ENCODE measurements at regions of chr9 and their contacts with region 1.

Region 1: DNA sequence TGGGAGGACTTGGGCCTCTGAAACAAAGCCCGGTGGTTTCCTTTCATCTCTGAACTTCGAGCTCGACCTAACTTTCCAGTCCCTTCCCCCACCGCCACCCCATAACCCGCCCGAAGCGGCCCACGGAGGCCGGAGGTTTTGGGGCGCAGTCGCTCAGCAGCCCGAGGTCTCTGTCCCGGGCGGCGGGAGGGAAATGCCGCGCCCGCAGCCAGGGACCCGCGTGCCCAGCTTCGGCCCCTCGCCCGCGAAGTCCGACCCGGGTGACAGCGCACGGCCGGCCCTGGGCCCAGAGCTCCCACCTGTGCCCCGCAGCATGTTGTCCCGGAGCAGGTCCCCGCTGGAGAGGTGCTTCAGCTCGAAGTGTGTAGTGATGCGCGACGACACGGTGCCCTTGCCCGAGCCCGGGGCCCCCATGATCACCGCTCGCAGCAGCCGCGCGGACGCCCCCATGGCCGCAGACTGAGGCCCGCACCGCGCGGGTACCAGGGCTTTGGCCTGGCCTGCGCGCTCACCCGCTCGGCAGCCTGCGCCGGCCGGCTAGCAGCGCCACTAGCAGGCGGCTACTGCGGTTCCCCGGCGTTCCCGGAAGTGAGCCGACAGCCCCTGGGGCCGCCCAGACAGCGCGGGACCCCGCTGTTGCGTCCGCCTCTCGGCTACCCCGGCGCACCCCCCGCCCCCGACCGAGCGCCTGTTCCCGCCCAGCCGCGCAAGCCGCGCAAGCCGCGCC is at the start of gene AK3:
- DNase-seq: peak; percentile 91
- ATAC-seq: peak; percentile 88
- H3K4me3 Mint-ChIP-seq: peak within 1 kb of the TSS; percentile 84
- H3K27ac Mint-ChIP-seq: peak within 1 kb of the TSS; percentile 91
- H3K4me1 Mint-ChIP-seq: peaks cover 34% of the 10 kb centered on the region
- H3K27me3 Mint-ChIP-seq: no peaks in the 10 kb centered on the region
- CTCF ChIP-seq: no peak
- total RNA-seq, gene AK3: 28.5 to 30.2 TPM (median 29.1 TPM) in 3 replicates

Region 2: GRCh38 chr9:4792572-4793458 is 52.0 kb after region 1 on chr9 and contains the start of gene RCL1:
- CTCF ChIA-PET with region 1: no interaction called
- POLR2A ChIA-PET with region 1: interaction called, 16 read pairs
- DNase-seq: peak; percentile 98
- ATAC-seq: peak; percentile 94
- H3K4me3 Mint-ChIP-seq: peak within 1 kb of the TSS; percentile 98
- H3K27ac Mint-ChIP-seq: peak within 1 kb of the TSS; percentile 96
- H3K4me1 Mint-ChIP-seq: peaks cover 37% of the 10 kb centered on the region
- H3K27me3 Mint-ChIP-seq: peaks cover 5% of the 10 kb centered on the region
- CTCF ChIP-seq: no peak
- total RNA-seq, gene RCL1: 22.4 to 27.2 TPM (median 25.3 TPM) in 3 replicates

Region 3: GRCh38 chr9:4803670-4804530 is 63.1 kb after region 1 on chr9:
- CTCF ChIA-PET with region 1: no interaction called
- POLR2A ChIA-PET with region 1: no interaction called
- DNase-seq: no peak
- ATAC-seq: no peak; the same call in 1 of the 2 replicates
- H3K4me3 Mint-ChIP-seq: no peak overlapping the region
- H3K27ac Mint-ChIP-seq: peak overlapping the region; percentile 39
- H3K4me1 Mint-ChIP-seq: peaks cover 27% of the 10 kb centered on the region
- H3K27me3 Mint-ChIP-seq: no peaks in the 10 kb centered on the region
- CTCF ChIP-seq: no peak

Measured in WTC11 (cell line).